H1 (cell line): ENCODE measurements at regions of chr2 and their contacts with region 1.

Region 1: DNA sequence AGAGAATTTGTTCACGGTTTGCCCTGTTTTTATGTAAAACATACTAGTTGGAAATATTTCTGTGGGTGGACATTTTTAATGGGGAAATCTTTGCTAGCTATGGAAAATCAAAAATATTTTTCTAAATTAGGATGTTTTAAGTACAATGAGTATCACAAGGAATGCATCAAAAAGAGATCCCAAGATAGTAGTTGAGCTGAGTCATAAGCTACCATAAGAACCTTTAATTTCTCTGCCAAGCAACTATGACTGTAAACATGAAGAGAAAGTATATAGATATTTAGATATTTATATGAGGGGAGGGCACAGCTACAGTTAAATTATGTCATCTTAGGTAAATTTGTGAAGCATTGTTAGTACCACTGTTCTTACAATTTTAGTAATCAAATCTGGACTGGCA is 646.2 kb downstream of the XIRP2 start:
- DNase-seq: no peak
- H3K4me3 ChIP-seq: no peak overlapping the region
- H3K27ac ChIP-seq: no peak overlapping the region
- H3K4me1 ChIP-seq: no peaks in the 10 kb centered on the region
- H3K27me3 ChIP-seq: no peaks in the 10 kb centered on the region
- CTCF ChIP-seq: no peak
- EP300 ChIP-seq: no peak
- POLR2A ChIP-seq: no peak
- RAD21 ChIP-seq: no peak

Region 2: DNA sequence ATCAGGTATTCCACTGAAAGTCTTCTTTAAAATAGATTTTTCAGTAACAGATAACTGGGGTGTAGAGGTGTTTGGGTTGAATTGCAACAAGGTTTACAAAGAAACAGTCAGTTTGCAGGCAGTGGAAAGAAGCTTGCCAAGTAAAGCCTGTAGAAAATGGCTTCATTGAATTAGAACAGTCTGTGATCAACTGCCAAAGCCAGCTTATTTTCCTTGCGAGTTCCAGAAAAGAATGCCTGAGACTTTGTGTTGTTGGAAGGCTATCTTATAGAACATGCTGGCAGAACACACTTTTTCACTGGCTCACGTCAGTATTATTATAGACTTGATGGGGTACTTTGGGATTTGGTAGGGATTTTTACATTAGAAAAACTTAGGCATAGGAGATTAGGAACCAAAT is 45.1 kb before region 1 on chr2:
- CTCF ChIA-PET with region 1: no interaction called
- POLR2A ChIA-PET with region 1: no interaction called
- DNase-seq: no peak
- H3K4me3 ChIP-seq: no peak overlapping the region
- H3K27ac ChIP-seq: no peak overlapping the region
- H3K4me1 ChIP-seq: peaks cover 0 to 3% (median 1%) of the 10 kb centered on the region in 4 experiments; a peak in 3 of 7 replicates
- H3K27me3 ChIP-seq: no peaks in the 10 kb centered on the region
- CTCF ChIP-seq: no peak
- EP300 ChIP-seq: no peak
- POLR2A ChIP-seq: no peak
- RAD21 ChIP-seq: no peak

Region 3: GRCh38 chr2:167550448-167550847 is 16.0 kb after region 1 on chr2:
- CTCF ChIA-PET with region 1: interaction called, 10 read pairs
- POLR2A ChIA-PET with region 1: interaction called, 3 read pairs
- DNase-seq: no peak
- H3K4me3 ChIP-seq: no peak overlapping the region
- H3K27ac ChIP-seq: no peak overlapping the region
- H3K4me1 ChIP-seq: peaks cover 0 to 3% (median 0%) of the 10 kb centered on the region in 4 experiments; a peak in 2 of 7 replicates
- H3K27me3 ChIP-seq: peaks cover 0 to 1% (median 0%) of the 10 kb centered on the region in 4 experiments; a peak in 1 of 7 replicates
- CTCF ChIP-seq: peak in 2 of 3 experiments; percentile 40 to 57; a peak in 2 of 4 replicates
- EP300 ChIP-seq: no peak
- POLR2A ChIP-seq: no peak
- RAD21 ChIP-seq: peak; percentile 56 to 64